ENCODE measurements at regions of chr17 and their contacts with region 1.

Region 1: GRCh38 chr17:67717624-67718329 is at the start of gene NOL11:
- DNase-seq: peak; percentile 99

Region 2: DNA sequence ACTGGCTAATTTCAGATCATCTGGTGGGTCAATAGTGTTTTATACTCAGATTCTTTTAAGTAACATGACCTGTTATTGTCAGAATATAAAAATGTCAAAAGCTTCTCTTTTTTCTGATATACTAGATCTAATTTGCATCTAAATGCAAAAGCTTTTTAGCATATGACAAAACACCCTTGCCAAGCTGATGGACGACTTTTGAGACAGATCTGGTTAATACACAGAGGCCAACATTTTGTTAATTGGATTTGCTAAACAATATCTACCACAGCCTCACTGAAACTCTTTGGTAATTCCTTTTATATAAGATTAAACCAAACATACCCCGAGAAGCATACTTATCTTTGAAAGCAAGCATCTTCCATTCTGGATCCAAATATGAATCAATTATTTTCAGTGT is 10.3 kb before region 1 on chr17:
- CTCF ChIA-PET with region 1: interaction called, 4 read pairs
- POLR2A ChIA-PET with region 1: interaction called, 20 read pairs
- DNase-seq: no peak

Region 3: DNA sequence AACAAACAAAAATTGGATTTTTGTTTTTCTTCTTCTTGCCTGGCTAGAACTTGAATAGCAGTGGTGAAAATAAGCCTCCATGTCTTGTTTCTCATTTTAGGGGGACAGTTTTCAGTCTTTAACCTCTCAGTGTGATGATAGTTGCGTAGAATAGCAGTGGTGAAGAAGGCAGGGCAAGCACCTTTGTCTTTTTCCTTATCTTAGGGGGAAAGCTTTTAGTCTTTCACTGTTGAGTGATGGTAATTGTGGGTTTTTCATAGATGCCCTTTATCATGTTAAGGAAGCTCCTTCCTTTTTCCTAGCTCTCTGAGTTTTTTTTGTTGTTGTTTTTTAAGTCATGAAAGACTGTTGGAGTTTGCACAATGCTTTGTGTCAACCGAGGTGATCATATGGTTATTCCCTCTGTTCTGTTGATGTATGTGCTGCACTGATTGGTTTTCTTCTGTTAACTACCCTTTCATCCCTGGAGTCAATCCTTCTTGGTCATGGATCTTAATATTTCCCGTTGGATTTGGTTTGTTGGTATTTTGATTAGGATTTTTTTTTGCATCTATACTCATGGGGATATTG is 15.7 kb after region 1 on chr17:
- CTCF ChIA-PET with region 1: interaction called, 3 read pairs
- POLR2A ChIA-PET with region 1: interaction called, 12 read pairs
- DNase-seq: no peak